HEK293 (cell line): ENCODE measurements at regions of chr12 and their contacts with region 1.

Region 1: DNA sequence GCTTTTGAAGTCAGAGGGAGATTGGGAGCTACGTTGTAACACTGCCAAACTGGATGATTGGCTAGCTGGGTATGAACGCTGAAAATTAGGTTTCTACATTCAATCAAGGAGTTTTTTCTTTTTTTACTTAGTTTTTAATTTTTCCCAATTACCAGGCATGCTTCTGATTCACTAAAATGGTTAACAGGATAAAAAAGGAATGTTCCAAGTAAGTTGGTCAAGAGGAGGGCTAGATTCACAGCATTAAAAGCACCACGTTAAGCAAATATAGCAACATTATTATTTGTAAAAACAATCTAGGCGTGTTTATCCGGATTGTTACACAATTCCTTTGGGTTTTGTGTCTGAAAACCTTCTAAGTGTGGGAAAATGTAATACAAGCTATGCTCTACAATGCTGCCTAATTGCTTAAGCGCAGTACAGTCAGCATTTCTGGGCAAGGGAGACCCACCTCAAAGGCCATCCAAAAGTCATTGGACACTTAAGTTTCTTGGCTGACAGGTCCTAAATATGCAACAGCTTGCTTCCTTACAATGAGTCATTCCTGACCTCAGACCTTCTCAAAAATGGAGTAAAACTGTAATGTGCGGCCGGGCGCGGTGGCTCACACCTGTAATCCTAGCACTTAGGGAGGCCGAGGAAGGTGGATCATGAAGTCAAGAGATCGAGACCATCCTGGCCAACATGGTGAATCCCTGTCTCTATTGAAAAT is 1.2 kb downstream of the RPLP0 start:
- H3K4me3 ChIP-seq: peak overlapping the region; percentile 94
- H3K27ac ChIP-seq: peak overlapping the region; percentile 60
- H3K4me1 ChIP-seq: peaks cover 4% of the 10 kb centered on the region
- CTCF ChIP-seq: no peak

Region 2: DNA sequence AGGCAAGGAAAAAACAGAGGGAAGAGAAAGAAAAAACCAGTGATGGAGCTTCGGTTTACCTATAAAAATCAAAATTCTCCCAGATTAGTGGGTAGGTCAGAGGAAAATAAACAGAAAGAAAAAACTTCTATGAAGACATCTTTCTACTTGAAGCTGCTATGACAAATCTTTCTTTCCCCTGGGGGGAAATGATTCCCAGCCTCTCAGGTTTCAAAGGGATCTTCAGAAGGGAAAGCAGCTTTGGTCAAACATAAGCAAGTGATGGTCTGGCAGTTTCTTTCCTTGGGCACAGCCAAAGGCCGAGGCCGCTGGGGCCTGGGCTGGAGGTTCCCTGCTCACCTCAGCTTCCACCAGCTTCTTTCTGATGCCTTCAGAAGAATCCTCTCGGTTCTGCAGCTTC is 427.3 kb before region 1 on chr12:
- CTCF ChIA-PET with region 1: no interaction called
- POLR2A ChIA-PET with region 1: no interaction called
- H3K4me3 ChIP-seq: no peak overlapping the region
- H3K27ac ChIP-seq: no peak overlapping the region
- H3K4me1 ChIP-seq: no peaks in the 10 kb centered on the region
- CTCF ChIP-seq: no peak

Region 3: DNA sequence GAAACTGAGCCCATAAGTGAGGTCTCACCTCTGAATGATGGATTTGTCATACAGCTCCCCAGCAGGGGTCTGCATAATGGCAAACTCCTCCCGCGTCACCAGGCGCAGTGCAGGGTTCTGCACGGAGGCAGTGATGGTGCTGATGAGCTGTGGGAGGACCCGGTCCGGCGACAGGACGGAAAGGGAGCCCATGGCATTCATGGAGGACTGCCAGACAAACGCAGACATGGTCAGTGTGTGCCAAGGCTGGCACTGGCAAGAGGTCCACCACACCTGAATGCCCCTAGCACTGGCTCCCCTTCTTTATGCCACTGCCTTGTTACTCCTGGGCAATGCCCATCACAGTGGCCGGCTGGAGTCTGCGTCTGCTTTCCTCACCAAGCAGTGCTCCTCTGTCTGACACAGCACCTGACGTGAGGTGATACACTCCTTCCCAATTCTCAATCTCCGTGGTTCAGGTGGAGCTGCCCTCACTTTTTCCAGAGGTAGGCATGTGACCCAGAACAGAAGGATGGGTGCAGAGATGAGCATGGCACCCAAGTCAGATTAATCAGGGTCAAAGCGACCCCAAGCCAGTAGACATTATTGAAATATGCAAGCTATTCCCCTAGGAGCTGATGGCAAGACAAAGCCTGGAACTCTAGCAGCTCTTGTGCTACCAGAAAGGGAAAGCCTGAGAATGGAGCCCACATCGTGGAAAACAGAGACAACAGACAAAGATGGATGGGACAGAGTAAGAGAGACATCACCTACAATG is 37.7 kb before region 1 on chr12:
- CTCF ChIA-PET with region 1: interaction called, 4 read pairs
- POLR2A ChIA-PET with region 1: interaction called, 12 read pairs
- H3K4me3 ChIP-seq: no peak overlapping the region
- H3K27ac ChIP-seq: no peak overlapping the region
- H3K4me1 ChIP-seq: no peaks in the 10 kb centered on the region
- CTCF ChIP-seq: no peak

Region 4: GRCh38 chr12:120216742-120217605 is 17.2 kb after region 1 on chr12:
- CTCF ChIA-PET with region 1: interaction called, 5 read pairs
- POLR2A ChIA-PET with region 1: interaction called, 36 read pairs
- H3K4me3 ChIP-seq: no peak overlapping the region
- H3K27ac ChIP-seq: no peak overlapping the region
- H3K4me1 ChIP-seq: no peaks in the 10 kb centered on the region
- CTCF ChIP-seq: no peak

Region 5: GRCh38 chr12:120249875-120250795 is 50.4 kb after region 1 on chr12:
- CTCF ChIA-PET with region 1: no interaction called
- POLR2A ChIA-PET with region 1: interaction called, 15 read pairs
- H3K4me3 ChIP-seq: no peak overlapping the region
- H3K27ac ChIP-seq: no peak overlapping the region
- H3K4me1 ChIP-seq: no peaks in the 10 kb centered on the region
- CTCF ChIP-seq: no peak

Region 6: DNA sequence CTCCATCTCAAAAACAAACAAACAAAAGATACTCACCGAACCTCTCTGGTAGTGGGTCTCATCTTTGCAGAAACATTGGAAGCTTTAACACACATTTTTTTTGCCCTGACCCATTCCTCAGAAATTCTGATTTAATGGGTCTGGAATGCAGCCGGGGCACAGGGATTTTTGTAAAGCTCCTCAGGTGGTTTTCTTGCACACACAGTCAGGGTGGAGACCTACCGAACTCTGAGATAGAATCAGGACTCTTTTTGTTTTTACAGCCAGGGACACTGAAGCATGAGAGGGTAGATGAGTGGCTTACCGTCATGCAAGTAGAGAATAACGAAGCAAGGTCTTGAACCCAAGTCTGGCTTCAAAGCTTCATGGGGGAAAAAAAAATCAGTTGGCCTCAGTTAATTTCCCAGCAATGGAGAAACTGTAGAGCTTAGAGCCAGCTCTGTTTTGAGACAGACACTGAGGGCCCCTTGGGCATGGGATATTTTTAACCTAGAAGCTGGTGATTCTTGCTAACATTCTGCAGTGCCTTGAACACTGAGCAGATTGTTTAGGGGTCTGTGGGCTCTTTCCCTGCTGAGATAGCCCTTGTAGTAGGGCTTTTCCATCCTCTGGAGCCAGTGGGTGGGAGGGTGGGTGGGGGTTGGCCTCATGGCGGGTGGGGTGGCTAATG is 87.2 kb after region 1 on chr12:
- CTCF ChIA-PET with region 1: interaction called, 3 read pairs
- POLR2A ChIA-PET with region 1: interaction called, 131 read pairs
- H3K4me3 ChIP-seq: no peak overlapping the region
- H3K27ac ChIP-seq: no peak overlapping the region
- H3K4me1 ChIP-seq: no peaks in the 10 kb centered on the region
- CTCF ChIP-seq: no peak